Mucosa of descending colon (tissue), 3 donors: ENCODE measurements at regions of chr7 and their contacts with region 1.

Region 1: DNA sequence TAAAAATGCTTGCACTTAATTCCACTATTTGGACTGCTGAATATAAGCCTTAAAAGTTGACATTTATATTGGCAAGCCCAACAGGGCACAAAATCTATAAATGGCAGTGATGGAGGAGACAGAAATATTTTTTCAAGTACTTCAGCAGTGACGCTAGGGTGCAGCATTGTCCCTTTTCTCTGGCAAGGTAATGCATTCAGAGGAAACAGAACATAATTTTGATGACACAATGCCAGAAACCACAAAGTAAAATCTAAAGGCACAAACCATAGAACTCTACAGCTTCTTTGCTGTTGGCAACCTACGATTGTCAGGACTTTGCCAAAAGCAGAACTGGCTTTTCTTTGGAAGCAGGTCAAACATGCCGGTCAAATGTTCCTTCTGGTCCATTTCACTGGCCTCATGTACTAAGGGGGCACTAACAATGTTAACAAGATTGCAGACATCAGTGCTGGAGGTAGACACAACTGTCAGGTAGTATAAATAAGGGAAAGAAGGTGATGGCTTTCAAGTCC is 30.9 kb upstream of the FAM133B start:
- DNase-seq: peak in 2 of 3 donors; percentile 37 to 64
- ATAC-seq: peak; percentile 91
- H3K4me3 ChIP-seq: no peak overlapping the region
- H3K4me1 ChIP-seq: no peaks in the 10 kb centered on the region
- CTCF ChIP-seq: peak; percentile 55

Region 2: DNA sequence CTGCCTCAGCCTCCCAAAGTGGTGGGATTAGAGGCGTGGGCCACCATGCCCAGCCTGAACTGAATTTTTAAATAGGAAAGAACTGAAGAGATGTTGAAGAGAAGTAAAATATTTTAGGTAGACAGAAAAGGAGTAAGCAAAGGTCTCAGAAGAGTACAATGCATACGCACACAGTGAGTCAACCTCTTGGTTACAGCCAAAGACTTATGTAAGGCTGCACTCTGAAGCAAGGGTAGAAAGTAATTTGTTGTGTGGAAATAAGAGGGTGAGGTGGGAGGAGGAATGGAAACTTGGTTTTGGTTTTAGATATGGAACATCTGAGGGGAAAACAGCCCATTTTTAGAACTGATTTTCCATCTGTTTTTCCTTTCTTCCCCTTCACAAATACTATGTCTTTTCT is 393.0 kb before region 1 on chr7:
- intact Hi-C with region 1: no loop called
- DNase-seq: no peak
- ATAC-seq: no peak
- H3K4me3 ChIP-seq: no peak overlapping the region
- H3K4me1 ChIP-seq: no peaks in the 10 kb centered on the region
- CTCF ChIP-seq: no peak

Region 3: DNA sequence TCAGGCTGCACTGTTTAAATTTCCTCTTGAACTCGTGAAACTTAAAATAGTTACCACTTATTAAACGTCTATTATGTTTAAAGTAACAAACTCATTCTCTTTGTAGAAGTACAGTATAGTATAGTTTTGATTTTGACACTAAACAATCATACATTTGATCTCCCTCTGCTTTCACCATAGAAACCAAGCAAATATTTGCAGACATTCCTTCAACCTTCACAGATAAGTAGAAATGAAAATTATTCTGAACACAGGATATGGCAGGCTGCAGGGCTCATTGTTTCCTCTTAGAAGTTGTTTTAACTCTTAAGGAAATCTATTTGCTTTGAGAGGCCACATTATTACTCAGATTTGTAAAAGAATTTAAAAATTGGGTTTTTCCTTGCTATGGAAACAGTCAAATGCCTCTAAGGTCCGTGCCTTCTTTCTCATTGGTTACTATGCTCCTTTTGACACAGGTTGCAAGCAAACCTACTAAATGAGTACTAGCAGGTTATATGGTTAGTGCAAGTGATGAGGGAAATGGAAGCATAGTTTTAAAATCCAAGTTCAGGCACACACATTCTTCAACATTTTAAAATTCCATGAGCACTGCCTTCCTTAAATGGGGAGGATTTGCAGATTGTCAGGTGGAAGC is 61.9 kb after region 1 on chr7:
- intact Hi-C with region 1: loop called in 1 of 2 experiments (anchors 10 kb)
- DNase-seq: no peak
- ATAC-seq: peak; percentile 62
- H3K4me3 ChIP-seq: no peak overlapping the region
- H3K4me1 ChIP-seq: peaks cover 26% of the 10 kb centered on the region
- CTCF ChIP-seq: no peak

Region 4: DNA sequence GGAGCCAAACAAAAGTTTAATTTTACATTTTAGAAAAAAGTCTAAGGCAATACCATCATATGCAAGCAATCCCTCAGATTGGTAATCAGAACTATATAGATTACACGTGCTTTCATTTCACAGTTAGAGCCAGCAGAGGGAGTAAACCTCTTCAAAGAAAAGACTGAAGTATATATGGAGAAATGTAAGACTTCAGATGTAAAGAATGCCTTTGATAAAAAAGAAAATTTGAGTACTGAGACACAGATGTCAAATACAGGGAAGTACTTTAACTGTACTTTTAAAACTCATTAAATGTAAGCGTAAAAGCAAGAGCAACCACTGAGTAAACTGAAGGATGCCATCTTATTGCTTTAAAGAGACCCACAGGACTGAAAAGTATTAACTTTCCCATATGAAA is 70.5 kb after region 1 on chr7:
- intact Hi-C with region 1: loop called (anchors 10 kb)
- DNase-seq: peak in 1 of 3 donors; percentile 72
- ATAC-seq: peak; percentile 64
- H3K4me3 ChIP-seq: no peak overlapping the region
- H3K4me1 ChIP-seq: peaks cover 6% of the 10 kb centered on the region
- CTCF ChIP-seq: peak; percentile 55

Region 5: DNA sequence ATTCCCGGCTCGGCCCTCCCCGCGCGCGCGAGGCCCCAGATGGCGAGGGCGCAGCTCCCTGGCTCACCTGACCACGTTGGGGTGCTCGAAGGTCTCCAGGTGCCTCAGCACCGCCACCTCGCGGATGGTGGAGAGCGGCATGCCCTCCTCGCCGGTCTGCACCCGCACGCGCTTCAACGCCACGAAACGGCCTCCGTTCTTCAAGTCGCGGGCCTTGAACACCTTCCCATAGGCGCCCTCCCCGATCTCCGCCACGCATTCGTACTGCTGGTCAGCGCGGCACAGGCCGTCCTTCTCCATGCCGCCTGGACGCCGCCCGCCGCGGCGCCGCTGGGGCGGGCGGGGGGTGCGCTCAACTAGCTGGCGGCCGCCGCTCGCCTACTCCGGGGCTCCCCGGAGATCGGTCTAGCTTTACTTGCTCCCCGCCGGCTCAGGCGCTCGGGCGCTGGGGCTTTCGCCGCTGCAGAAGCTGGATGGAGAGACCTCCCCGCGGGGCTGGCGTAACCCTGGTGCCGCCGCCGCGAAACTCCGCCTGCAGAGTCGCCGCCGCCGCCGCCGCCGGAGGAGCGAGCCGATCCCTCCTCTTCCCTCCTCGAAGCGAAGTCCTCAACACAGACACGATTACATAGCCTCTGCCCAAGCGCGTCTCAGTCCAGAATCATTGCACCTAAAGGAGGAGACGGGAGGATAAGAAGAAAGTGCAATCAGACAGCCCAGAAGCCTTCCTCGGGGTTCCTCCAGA is 212.1 kb after region 1 on chr7:
- intact Hi-C with region 1: loop called in 1 of 2 experiments (anchors 5 kb)
- DNase-seq: peak; percentile 94 to 95 (median 95)
- ATAC-seq: peak; percentile 85
- H3K4me3 ChIP-seq: peak overlapping the region; percentile 59
- H3K4me1 ChIP-seq: peaks cover 11% of the 10 kb centered on the region
- CTCF ChIP-seq: peak; percentile 80

Region 6: DNA sequence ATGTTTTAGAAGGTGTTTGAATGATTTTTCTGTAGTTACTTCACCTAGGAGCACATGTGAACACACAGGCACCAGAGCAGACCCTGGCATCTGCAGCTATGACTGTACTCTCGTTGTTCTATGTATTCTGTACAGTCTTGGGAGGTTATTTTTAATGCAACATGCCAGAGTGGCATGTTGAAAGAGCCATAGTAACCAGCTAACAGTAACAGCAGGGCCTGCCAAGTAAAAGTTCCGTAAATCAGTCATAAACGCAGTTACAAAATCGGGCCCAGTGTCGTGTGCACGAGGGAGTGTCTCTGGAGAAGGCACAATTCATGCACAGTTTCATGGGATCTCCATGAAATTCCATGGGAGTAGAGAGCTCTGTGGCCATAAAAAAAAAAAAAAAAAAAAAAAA is 323.6 kb after region 1 on chr7:
- intact Hi-C with region 1: no loop called
- DNase-seq: peak; percentile 49 to 79 (median 51)
- ATAC-seq: peak; percentile 89
- H3K4me3 ChIP-seq: no peak overlapping the region
- H3K4me1 ChIP-seq: peaks cover 10% of the 10 kb centered on the region
- CTCF ChIP-seq: no peak

Region 7: GRCh38 chr7:93055543-93056107 is 434.5 kb after region 1 on chr7:
- intact Hi-C with region 1: loop called (anchors 5 kb)
- DNase-seq: no peak
- ATAC-seq: peak; percentile 62
- H3K4me3 ChIP-seq: no peak overlapping the region
- H3K4me1 ChIP-seq: peaks cover 6% of the 10 kb centered on the region
- CTCF ChIP-seq: peak; percentile 41